Dorsolateral prefrontal cortex (tissue), 120 donors: ENCODE measurements at regions of chrX and their contacts with region 1.

Region 1: GRCh38 chrX:153794018-153794896 is at the starts of genes IDH3G and SSR4:
- DNase-seq: peak; percentile 82 to 93 (median 92)
- H3K4me3 ChIP-seq: peak within 1 kb of the TSS; percentile 49 to 84 (median 70)
- H3K27ac ChIP-seq: peak within 1 kb of the TSS; percentile 63 to 97 (median 91)
- H3K27me3 ChIP-seq: peaks cover 0 to 83% (median 0%) of the 10 kb centered on the region in 45 donors
- CTCF ChIP-seq: peak in 36 of 56 donors; percentile 10 to 66 (median 36)
- total RNA-seq, gene IDH3G: 35.7 to 90.5 (median 70.9) TPM
- total RNA-seq, gene SSR4: 55.7 to 109 (median 84.8) TPM

Region 2: DNA sequence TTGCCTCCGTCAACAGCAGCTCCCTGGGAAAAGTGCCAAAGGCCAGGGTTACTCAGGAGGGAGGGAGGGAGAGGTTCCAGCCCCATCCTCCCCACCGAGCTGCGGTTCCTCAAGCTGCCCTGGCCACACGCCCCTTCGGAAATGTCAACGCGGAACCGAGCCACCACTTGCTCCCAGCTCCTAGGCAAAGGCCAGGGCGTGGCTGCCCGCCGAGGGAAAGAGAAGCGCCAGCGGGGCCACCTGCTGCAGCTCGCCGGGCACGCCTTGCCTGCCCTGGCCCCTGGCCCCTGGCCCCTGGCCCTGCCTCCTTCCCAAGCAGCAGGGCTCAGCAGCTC is 91.3 kb before region 1 on chrX:
- intact Hi-C with region 1: no loop called
- DNase-seq: no peak
- H3K4me3 ChIP-seq: no peak overlapping the region
- H3K27ac ChIP-seq: no peak overlapping the region
- H3K27me3 ChIP-seq: peaks cover 0 to 75% (median 0%) of the 10 kb centered on the region in 45 donors
- CTCF ChIP-seq: no peak

Region 3: DNA sequence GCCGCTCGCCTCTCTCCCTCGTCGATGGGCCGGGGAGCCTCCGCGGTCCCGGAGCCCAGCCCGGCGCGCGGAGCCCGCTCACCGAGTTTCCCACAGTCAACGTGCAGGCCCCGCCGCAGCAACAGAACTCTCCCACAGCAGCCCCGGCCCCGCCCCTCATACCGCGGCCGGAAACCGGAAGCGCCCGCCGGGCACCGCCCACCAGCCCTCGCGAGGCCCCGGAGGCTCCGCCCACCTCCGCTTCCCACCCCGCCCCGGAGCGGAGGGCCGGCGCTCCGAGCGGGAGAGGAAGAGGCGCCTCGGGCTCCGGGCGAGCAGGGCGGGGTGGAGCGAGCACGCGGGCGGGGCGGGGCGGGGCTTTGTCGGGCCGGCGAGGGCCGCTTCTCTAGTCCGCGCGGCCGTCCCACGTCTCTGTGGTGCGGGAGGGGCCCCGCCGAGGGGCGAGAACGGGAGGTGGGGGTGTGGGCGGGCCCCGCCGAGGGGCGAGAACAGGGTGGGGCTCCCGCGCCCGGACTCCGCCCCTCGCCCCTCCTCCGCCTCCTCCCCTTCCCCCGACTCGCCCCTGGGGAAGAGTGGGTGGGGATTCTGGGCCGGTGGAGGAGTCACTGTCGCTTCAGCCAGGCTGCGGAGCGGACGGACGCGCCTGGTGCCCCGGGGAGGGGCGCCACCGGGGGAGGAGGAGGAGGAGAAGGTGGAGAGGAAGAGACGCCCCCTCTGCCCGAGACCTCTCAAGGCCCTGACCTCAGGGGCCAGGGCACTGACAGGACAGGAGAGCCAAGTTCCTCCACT is 69.8 kb before region 1 on chrX and contains the starts of genes ABCD1 and BCAP31:
- intact Hi-C with region 1: loop called in 1 of 2 experiments (anchors 5 kb)
- DNase-seq: peak; percentile 63 to 92 (median 80)
- H3K4me3 ChIP-seq: peak within 1 kb of the TSS; percentile 35 to 76 (median 67)
- H3K27ac ChIP-seq: peak within 1 kb of the TSS in 56 of 59 donors; percentile 23 to 88 (median 78)
- H3K27me3 ChIP-seq: peaks cover 0 to 73% (median 5%) of the 10 kb centered on the region in 45 donors
- CTCF ChIP-seq: no peak
- total RNA-seq, gene ABCD1: 2.4 to 8.3 (median 4.5) TPM
- total RNA-seq, gene BCAP31: 115 to 220 (median 178) TPM

Region 4: GRCh38 chrX:153875391-153876111 is 81.3 kb after region 1 on chrX:
- intact Hi-C with region 1: no loop called
- DNase-seq: peak in 6 of 10 donors; percentile 29 to 76 (median 48)
- H3K4me3 ChIP-seq: peak overlapping the region in 51 of 59 donors; percentile 5 to 60 (median 41)
- H3K27ac ChIP-seq: peak overlapping the region in 16 of 59 donors; percentile 18 to 71 (median 42)
- H3K27me3 ChIP-seq: peaks cover 0 to 88% (median 39%) of the 10 kb centered on the region in 45 donors
- CTCF ChIP-seq: peak in 1 of 56 donors; percentile 14

Region 5: GRCh38 chrX:153927922-153928760 is 133.9 kb after region 1 on chrX:
- intact Hi-C with region 1: loop called (anchors 1 to 5 kb)
- DNase-seq: peak; percentile 88 to 98 (median 94)
- H3K4me3 ChIP-seq: peak overlapping the region; percentile 40 to 76 (median 64)
- H3K27ac ChIP-seq: peak overlapping the region; percentile 55 to 98 (median 94)
- H3K27me3 ChIP-seq: peaks cover 0 to 82% (median 11%) of the 10 kb centered on the region in 45 donors
- CTCF ChIP-seq: peak in 35 of 56 donors; percentile 4 to 50 (median 27)